ENCODE measurements at regions of chr19 and their contacts with region 1.

Region 1: GRCh38 chr19:17075035-17075863 is at the starts of genes HAUS8 and MYO9B:
- DNase-seq: peak; percentile 99 to 100 (median 100)
- H3K4me3 ChIP-seq: peak within 1 kb of the TSS; percentile 91 to 93
- H3K4me3 Mint-ChIP-seq: peak within 1 kb of the TSS; percentile 96 to 100 (median 98)
- H3K27ac ChIP-seq: peak within 1 kb of the TSS; percentile 77
- H3K27ac Mint-ChIP-seq: peak within 1 kb of the TSS; percentile 89 to 99 (median 98)
- H3K4me1 ChIP-seq: peaks cover 56% of the 10 kb centered on the region
- H3K4me1 Mint-ChIP-seq: peaks cover 41 to 79% (median 53%) of the 10 kb centered on the region in 4 donors
- H3K27me3 ChIP-seq: no peaks in the 10 kb centered on the region
- H3K27me3 Mint-ChIP-seq: no peaks in the 10 kb centered on the region
- total RNA-seq, gene HAUS8: 20.0 to 20.9 TPM
- total RNA-seq, gene MYO9B: 176 to 181 TPM

Region 2: DNA sequence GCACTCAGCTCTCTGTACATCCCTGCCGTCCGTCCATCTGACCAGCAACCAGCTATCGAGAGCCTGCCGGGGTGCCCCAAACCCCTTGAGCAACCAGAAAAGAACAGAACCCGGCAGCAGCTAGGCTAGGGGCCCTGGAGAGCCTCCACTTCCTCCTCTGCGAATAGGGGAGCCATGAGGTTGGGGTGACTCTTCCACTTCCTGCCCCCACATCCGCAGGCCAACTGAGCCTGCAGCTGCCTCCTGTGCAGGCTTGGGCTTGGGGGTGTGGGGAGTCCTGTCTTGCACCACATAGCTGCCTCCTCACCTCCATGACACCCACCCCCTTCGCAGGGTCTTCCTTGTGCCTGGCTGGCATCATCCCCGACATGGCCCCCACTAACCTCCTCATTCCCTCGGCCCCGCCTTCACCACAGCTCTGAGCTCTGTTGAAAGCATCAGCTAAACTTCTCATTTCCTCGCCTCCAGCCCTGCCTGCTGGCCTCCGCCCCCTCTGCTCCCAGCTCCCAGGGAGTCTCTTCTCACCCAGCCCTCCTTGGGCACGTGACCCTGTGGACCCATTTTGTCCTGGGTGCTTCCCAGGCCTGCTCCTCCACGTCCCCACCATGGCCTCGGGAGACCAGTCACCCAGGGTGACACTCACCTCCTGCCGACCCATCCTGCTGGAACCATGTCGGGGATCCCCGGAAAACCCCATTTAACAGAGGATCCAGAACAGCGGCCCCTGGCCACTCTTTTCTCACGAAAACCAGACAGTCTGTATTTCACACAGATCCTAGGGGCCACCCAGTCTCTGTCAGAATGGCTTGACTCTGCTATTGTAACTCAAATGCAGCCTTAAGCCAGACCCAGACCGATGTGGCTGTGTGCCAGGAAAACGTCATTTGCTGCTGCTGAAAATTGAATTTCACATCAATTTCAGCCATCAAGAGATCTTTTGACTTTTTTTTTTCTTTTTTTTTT is 50.7 kb after region 1 on chr19:
- CTCF ChIA-PET with region 1: interaction called, 12 read pairs
- POLR2A ChIA-PET with region 1: interaction called, 84 read pairs
- intact Hi-C with region 1: loop called (anchors 1 kb)
- DNase-seq: peak; percentile 82 to 91 (median 87)
- H3K4me3 ChIP-seq: peak overlapping the region; percentile 51 to 73
- H3K4me3 Mint-ChIP-seq: peak overlapping the region; percentile 79 to 93 (median 91)
- H3K27ac ChIP-seq: peak overlapping the region; percentile 76
- H3K27ac Mint-ChIP-seq: peak overlapping the region; percentile 97 to 99 (median 99)
- H3K4me1 ChIP-seq: peaks cover 52% of the 10 kb centered on the region
- H3K4me1 Mint-ChIP-seq: peaks cover 23 to 61% (median 40%) of the 10 kb centered on the region in 4 donors
- H3K27me3 ChIP-seq: no peaks in the 10 kb centered on the region
- H3K27me3 Mint-ChIP-seq: no peaks in the 10 kb centered on the region

Region 3: GRCh38 chr19:17164639-17165038 is 89.4 kb after region 1 on chr19:
- CTCF ChIA-PET with region 1: no interaction called
- POLR2A ChIA-PET with region 1: no interaction called
- intact Hi-C with region 1: no loop called
- DNase-seq: no peak
- H3K4me3 ChIP-seq: no peak overlapping the region
- H3K4me3 Mint-ChIP-seq: no peak overlapping the region
- H3K27ac ChIP-seq: no peak overlapping the region
- H3K27ac Mint-ChIP-seq: no peak overlapping the region
- H3K4me1 ChIP-seq: no peaks in the 10 kb centered on the region
- H3K4me1 Mint-ChIP-seq: peaks cover 0 to 4% (median 1%) of the 10 kb centered on the region in 4 donors
- H3K27me3 ChIP-seq: no peaks in the 10 kb centered on the region
- H3K27me3 Mint-ChIP-seq: no peaks in the 10 kb centered on the region

Region 4: DNA sequence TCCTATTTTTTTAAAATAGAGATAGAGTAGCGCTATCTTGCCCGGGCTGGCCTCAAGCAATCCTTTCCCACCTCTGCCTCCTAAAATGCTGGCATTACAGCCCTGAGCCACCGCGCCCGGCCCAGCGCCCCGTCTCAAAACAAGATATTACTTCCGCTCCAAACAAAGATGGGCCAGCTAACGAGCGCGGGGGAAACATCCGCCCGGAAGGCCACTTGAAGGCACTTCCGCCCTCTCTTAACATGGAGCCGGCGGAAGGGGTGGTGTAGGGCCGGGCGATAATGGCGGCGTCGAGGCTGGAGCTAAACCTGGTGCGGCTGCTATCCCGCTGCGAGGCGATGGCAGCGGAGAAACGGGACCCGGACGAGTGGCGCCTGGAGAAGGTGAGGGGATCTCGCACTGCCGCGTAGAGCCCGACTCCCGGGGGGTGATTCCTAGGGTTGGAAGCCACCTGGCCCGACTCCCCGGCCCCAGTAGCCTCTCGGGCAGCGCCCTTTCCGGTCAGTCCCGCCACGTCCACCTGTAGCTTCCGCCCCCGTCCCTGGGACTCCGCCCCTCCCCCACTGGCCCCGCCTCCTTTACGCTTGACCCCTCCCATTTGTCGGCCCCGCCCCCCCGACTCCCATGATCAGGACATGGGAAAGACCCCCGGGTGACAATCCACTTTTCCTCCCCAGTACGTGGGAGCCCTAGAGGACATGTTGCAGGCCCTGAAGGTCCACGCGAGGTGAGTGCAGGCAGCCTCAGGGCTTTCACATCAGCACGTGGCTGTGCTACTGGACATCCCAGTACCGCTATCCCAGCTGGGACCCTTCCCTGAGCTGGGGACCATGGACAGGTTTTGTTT is 140.1 kb after region 1 on chr19 and contains the start of gene USE1:
- CTCF ChIA-PET with region 1: no interaction called
- POLR2A ChIA-PET with region 1: interaction called, 24 read pairs
- intact Hi-C with region 1: loop called (anchors 1 kb)
- DNase-seq: peak; percentile 86 to 92 (median 88)
- H3K4me3 ChIP-seq: peak within 1 kb of the TSS; percentile 42 to 95
- H3K4me3 Mint-ChIP-seq: peak within 1 kb of the TSS; percentile 86 to 95 (median 91)
- H3K27ac ChIP-seq: peak within 1 kb of the TSS; percentile 79
- H3K27ac Mint-ChIP-seq: peak within 1 kb of the TSS; percentile 87 to 99 (median 99)
- H3K4me1 ChIP-seq: peaks cover 16% of the 10 kb centered on the region
- H3K4me1 Mint-ChIP-seq: peaks cover 2 to 21% (median 13%) of the 10 kb centered on the region in 4 donors
- H3K27me3 ChIP-seq: no peaks in the 10 kb centered on the region
- H3K27me3 Mint-ChIP-seq: no peaks in the 10 kb centered on the region
- total RNA-seq, gene USE1: 38.1 to 42.8 TPM

Region 5: DNA sequence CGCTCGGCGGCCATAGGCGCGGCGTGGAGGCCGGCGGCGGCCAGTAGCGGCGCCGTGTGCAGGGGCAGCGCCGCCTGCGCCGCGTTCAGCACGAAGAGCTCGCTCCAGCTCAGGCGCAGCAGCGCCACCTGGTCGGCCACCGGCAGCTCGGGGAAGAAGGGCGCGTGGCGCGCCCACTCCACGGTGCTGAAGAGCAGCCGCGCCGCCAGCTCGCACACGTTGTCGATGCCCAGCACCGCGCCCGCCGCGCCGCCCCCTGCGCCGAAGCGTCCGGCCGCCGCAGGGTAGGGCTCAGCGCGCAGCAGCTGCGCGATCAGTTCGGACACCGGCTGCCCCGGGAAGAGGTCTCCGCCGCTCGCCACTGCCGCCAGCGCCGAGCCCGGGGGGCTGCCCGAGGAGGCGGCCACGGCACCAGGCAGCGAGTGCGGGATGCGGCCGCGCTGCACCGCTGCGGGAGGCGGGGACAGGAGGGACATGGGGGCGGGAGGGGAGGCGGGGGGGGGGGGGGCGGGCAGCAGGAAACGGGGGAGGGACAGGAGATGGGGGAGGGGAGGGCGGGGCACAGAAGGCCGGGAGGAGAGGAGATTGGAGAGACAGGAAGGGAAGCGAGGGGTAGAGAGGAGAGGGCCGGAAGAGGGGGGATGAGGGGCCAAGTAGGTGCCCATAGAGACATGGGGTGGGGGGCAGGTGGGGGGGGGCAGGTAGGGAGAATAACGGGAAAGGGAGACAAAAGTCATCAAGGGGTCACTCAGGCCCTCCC is 160.5 kb after region 1 on chr19:
- CTCF ChIA-PET with region 1: interaction called, 7 read pairs
- POLR2A ChIA-PET with region 1: interaction called, 26 read pairs
- intact Hi-C with region 1: loop called (anchors 1 kb)
- DNase-seq: peak; percentile 71 to 77 (median 73)
- H3K4me3 ChIP-seq: peak overlapping the region; percentile 69 to 84
- H3K4me3 Mint-ChIP-seq: peak overlapping the region; percentile 70 to 85 (median 78)
- H3K27ac ChIP-seq: peak overlapping the region; percentile 40
- H3K27ac Mint-ChIP-seq: peak overlapping the region in 1 of 7 donors; percentile 64
- H3K4me1 ChIP-seq: peaks cover 20% of the 10 kb centered on the region
- H3K4me1 Mint-ChIP-seq: peaks cover 2 to 28% (median 6%) of the 10 kb centered on the region in 4 donors
- H3K27me3 ChIP-seq: no peaks in the 10 kb centered on the region
- H3K27me3 Mint-ChIP-seq: no peaks in the 10 kb centered on the region

Region 6: GRCh38 chr19:17336872-17337722 is 261.8 kb after region 1 on chr19 and contains the start of gene GTPBP3:
- CTCF ChIA-PET with region 1: no interaction called
- POLR2A ChIA-PET with region 1: no interaction called
- intact Hi-C with region 1: loop called (anchors 1 kb)
- DNase-seq: peak; percentile 93 to 99 (median 97)
- H3K4me3 ChIP-seq: peak within 1 kb of the TSS; percentile 52 to 99
- H3K4me3 Mint-ChIP-seq: peak within 1 kb of the TSS; percentile 90 to 98 (median 94)
- H3K27ac ChIP-seq: peak within 1 kb of the TSS; percentile 84
- H3K27ac Mint-ChIP-seq: peak within 1 kb of the TSS; percentile 90 to 99 (median 97)
- H3K4me1 ChIP-seq: peaks cover 47% of the 10 kb centered on the region
- H3K4me1 Mint-ChIP-seq: peaks cover 18 to 53% (median 32%) of the 10 kb centered on the region in 4 donors
- H3K27me3 ChIP-seq: no peaks in the 10 kb centered on the region
- H3K27me3 Mint-ChIP-seq: no peaks in the 10 kb centered on the region
- total RNA-seq, gene GTPBP3: 53.7 to 58.4 TPM